ENCODE measurements at regions of chr15 and their contacts with region 1.

Region 1: DNA sequence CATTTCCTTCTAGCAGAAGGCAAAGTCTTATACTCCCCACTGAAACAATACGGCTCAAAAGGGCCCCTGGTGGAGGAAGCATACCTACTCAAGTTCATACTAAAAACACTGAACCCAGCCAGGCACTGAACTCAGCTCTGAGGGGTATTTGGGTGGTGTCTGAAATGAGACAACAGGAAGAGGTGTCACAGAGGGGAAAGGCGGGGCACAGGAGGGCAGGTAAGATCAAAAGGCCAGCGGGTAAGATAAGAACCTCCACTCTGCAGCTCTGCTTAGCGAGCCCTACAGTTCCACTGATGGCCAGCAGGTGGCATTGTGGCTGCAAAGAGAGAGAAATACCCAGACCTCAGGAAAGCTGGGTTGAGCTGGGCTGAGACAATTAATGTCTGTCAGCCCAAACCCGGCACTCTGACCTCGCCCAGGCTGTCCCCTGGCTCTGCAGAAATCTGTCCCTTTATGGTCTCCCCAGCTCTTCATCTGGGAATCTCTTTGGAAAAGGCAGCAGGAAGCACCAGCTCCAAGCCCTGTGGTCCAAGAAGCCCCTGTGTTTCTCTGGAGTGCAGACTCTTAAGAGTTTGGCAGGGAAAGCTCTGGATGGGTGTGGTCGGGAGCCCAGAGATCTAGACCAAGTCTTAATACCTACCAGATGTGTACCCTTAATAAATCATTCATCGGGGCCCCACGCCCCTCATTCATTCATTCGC is 8.4 kb downstream of the MFGE8 start:
- DNase-seq: peak; percentile 85 to 91 (median 88)
- ATAC-seq: peak; percentile 93
- H3K4me3 ChIP-seq: no peak overlapping the region
- H3K27ac ChIP-seq: 0 out of 3 replicates have a peak overlapping the region, but pooled peaks have one; percentile 25
- H3K4me1 ChIP-seq: peaks cover 17 to 26% of the 10 kb centered on the region in 2 experiments; a peak in 4 of 5 replicates
- H3K27me3 ChIP-seq: no peaks in the 10 kb centered on the region
- CTCF ChIP-seq: peak; percentile 94 to 98 (median 94)
- EP300 ChIP-seq: peak; percentile 13; the same call in 1 of the 2 replicates
- POLR2A ChIP-seq: no peak
- RAD21 ChIP-seq: peak; percentile 94 to 95

Region 2: GRCh38 chr15:88949734-88950400 is 45.1 kb after region 1 on chr15:
- CTCF ChIA-PET with region 1: no interaction called
- POLR2A ChIA-PET with region 1: no interaction called
- in situ Hi-C with region 1: no loop called
- intact Hi-C with region 1: no loop called
- DNase-seq: no peak
- ATAC-seq: no peak
- H3K4me3 ChIP-seq: no peak overlapping the region
- H3K27ac ChIP-seq: no peak overlapping the region
- H3K4me1 ChIP-seq: peaks cover 0 to 7% of the 10 kb centered on the region in 2 experiments; a peak in 1 of 5 replicates
- H3K27me3 ChIP-seq: no peaks in the 10 kb centered on the region
- CTCF ChIP-seq: no peak
- EP300 ChIP-seq: no peak
- POLR2A ChIP-seq: no peak
- RAD21 ChIP-seq: no peak

Region 3: DNA sequence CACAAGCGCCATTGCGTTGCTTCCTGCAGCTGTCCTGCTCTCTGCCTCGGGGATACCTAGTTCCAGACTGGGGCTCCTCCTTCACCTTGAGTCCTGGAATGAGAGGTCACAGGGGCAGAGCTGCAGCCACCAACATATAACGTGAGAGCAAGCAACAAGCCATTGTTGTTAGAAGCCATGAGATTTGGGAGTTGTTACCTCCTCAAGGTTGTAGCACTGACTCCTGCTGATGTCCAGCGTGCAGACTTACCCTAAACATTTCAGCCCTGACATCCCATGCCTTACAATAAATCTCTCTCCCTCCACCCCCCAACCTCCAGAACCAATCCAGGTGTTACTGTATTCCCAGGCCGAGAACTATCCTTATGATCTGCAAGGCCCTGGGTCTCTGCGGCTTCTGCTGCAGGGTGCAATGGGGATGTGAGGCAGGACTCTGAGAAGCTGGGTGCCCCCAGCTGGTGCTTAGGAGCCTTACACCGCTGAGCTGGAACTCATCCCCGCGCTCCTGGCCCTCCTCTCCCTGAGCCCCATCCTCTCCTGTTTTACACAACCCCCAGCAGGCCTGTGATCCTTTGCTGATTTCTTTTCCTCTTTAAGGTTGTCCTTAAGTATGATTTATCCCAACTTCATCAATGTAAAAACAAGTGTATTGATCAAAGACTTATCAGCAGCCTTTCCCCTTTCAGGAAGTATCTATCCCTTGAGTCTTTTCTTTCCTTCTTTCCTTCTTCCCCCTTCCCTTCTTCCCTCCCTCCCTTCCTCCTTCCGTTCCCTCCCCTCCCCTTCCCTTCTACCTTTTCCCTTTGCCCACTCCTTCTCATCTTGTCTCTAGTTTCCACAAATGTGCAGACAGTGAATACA is 99.3 kb after region 1 on chr15:
- CTCF ChIA-PET with region 1: interaction called, 6 read pairs
- POLR2A ChIA-PET with region 1: interaction called, 20 read pairs
- in situ Hi-C with region 1: no loop called
- intact Hi-C with region 1: loop called (anchors 1 kb)
- DNase-seq: peak; percentile 60 to 80 (median 72)
- ATAC-seq: peak; percentile 96
- H3K4me3 ChIP-seq: no peak overlapping the region
- H3K27ac ChIP-seq: no peak overlapping the region
- H3K4me1 ChIP-seq: peaks cover 15 to 31% of the 10 kb centered on the region in 2 experiments
- H3K27me3 ChIP-seq: no peaks in the 10 kb centered on the region
- CTCF ChIP-seq: peak; percentile 75 to 85 (median 80)
- EP300 ChIP-seq: no peak
- POLR2A ChIP-seq: no peak
- RAD21 ChIP-seq: peak; percentile 82 to 95